ENCODE measurements at regions of chr16 and their contacts with region 1.

Region 1: GRCh38 chr16:21646721-21647561 is 5.5 kb downstream of the IGSF6 start:
- DNase-seq: peak; percentile 42 to 85 (median 72)
- H3K4me3 ChIP-seq: peak overlapping the region; percentile 12
- H3K4me3 Mint-ChIP-seq: peak overlapping the region; percentile 68 to 82 (median 78)
- H3K27ac ChIP-seq: peak overlapping the region; percentile 26
- H3K27ac Mint-ChIP-seq: peak overlapping the region; percentile 85 to 98 (median 92)
- H3K4me1 ChIP-seq: peaks cover 57% of the 10 kb centered on the region
- H3K4me1 Mint-ChIP-seq: peaks cover 54 to 70% (median 60%) of the 10 kb centered on the region in 3 donors
- H3K27me3 ChIP-seq: no peaks in the 10 kb centered on the region
- H3K27me3 Mint-ChIP-seq: no peaks in the 10 kb centered on the region

Region 2: DNA sequence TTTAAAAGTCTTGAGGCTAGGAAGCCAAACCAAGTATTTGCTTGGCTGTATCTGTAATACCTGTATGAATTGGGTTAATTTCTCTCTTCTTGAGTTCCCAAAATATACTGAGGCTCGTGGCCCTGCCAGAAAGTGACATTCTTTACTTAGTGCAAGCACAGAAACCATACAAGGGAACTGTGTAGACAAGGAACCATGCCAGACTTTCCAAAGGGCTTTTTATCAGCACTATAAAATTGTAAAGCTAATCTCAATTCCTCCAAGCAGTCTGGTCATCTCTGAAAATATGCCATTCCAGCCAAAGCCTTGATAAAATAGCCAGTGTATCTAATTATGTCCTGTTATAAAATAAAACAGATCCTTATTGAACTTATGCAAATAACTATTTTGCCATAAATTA is 361.6 kb before region 1 on chr16:
- CTCF ChIA-PET with region 1: no interaction called
- POLR2A ChIA-PET with region 1: no interaction called
- DNase-seq: no peak
- H3K4me3 ChIP-seq: no peak overlapping the region
- H3K4me3 Mint-ChIP-seq: no peak overlapping the region
- H3K27ac ChIP-seq: no peak overlapping the region
- H3K27ac Mint-ChIP-seq: no peak overlapping the region
- H3K4me1 ChIP-seq: no peaks in the 10 kb centered on the region
- H3K4me1 Mint-ChIP-seq: peaks cover 0 to 7% (median 2%) of the 10 kb centered on the region in 3 donors
- H3K27me3 ChIP-seq: peaks cover 4% of the 10 kb centered on the region
- H3K27me3 Mint-ChIP-seq: peaks cover 61 to 76% of the 10 kb centered on the region in 2 donors

Region 3: GRCh38 chr16:21599233-21600030 is 47.5 kb before region 1 on chr16 and contains the start of gene METTL9:
- CTCF ChIA-PET with region 1: no interaction called
- POLR2A ChIA-PET with region 1: interaction called, 13 read pairs
- DNase-seq: peak; percentile 90 to 96 (median 94)
- H3K4me3 ChIP-seq: peak within 1 kb of the TSS; percentile 87
- H3K4me3 Mint-ChIP-seq: peak within 1 kb of the TSS; percentile 91 to 97 (median 93)
- H3K27ac ChIP-seq: peak within 1 kb of the TSS; percentile 75
- H3K27ac Mint-ChIP-seq: peak within 1 kb of the TSS; percentile 84 to 98 (median 96)
- H3K4me1 ChIP-seq: peaks cover 40% of the 10 kb centered on the region
- H3K4me1 Mint-ChIP-seq: peaks cover 45 to 63% (median 58%) of the 10 kb centered on the region in 3 donors
- H3K27me3 ChIP-seq: no peaks in the 10 kb centered on the region
- H3K27me3 Mint-ChIP-seq: no peaks in the 10 kb centered on the region
- total RNA-seq, gene METTL9: 73.8 to 74.2 TPM

Region 4: DNA sequence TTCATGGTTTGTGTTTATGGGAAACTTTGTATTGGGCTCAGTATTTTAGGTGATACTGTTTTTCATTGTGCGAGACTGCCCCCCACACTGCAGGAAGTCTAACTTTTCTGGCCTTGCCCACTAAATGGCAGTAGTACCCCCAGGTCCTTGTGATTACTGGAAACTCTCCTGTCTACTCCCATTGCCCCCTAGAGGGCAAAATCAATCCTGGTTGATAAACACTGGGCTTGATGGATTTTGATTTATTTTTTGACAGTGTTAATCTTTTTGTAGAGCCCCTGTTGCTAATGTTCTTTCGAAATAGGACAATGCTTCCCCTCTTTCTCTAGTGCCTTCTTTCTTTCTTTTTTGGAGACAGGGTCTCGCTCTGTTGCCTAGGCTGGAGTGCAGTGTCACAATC is 32.0 kb before region 1 on chr16:
- CTCF ChIA-PET with region 1: no interaction called
- POLR2A ChIA-PET with region 1: no interaction called
- DNase-seq: no peak
- H3K4me3 ChIP-seq: no peak overlapping the region
- H3K4me3 Mint-ChIP-seq: no peak overlapping the region
- H3K27ac ChIP-seq: no peak overlapping the region
- H3K27ac Mint-ChIP-seq: peak overlapping the region in 3 of 8 donors; percentile 29 to 50 (median 47)
- H3K4me1 ChIP-seq: peaks cover 51% of the 10 kb centered on the region
- H3K4me1 Mint-ChIP-seq: peaks cover 54 to 80% (median 72%) of the 10 kb centered on the region in 3 donors
- H3K27me3 ChIP-seq: no peaks in the 10 kb centered on the region
- H3K27me3 Mint-ChIP-seq: no peaks in the 10 kb centered on the region